ENCODE measurements at regions of chr17 and their contacts with region 1.

Region 1: GRCh38 chr17:28571255-28572122 is at the start of gene PIGS:
- DNase-seq: peak; percentile 88

Region 2: DNA sequence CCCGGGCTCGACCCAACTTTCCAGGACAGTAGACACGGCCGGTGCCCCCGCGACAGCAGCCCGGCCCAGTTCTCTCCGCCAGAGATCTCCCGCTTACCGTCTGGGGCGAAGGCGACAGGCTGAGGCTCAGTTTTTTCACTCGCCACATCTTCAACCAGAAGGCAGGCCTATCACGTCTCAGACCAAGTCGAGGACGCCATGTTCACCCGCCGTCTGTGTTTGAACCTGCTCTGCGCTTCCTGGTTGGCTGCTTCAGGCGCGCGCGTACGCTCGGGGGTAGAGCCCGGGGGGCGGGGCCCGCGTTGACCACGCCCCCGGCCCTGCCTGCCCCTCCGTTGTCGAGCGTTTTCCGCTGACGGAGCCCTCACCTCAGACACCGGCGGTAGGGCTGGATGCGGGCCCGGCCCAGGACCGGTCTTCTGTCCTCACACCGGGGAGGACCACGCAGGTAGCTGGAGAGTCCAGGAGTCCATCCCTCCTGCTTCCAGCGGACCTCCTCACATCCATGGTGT is 27.4 kb after region 1 on chr17 and contains the start of gene SPAG5:
- CTCF ChIA-PET with region 1: interaction called, 3 read pairs
- POLR2A ChIA-PET with region 1: interaction called, 11 read pairs
- DNase-seq: peak; percentile 94

Measured in HEK293T (cell line).